ENCODE measurements at regions of chr19 and their contacts with region 1.

Region 1: GRCh38 chr19:55516878-55517620 is 19.9 kb downstream of the SBK2 start:
- DNase-seq: peak; percentile 100
- CTCF ChIP-seq: peak; percentile 98

Region 2: GRCh38 chr19:55418185-55418584 is 98.9 kb before region 1 on chr19:
- CTCF ChIA-PET with region 1: no interaction called
- POLR2A ChIA-PET with region 1: no interaction called
- DNase-seq: peak; percentile 71
- CTCF ChIP-seq: peak; percentile 71

Region 3: GRCh38 chr19:55549500-55550320 is 32.7 kb after region 1 on chr19:
- CTCF ChIA-PET with region 1: no interaction called
- POLR2A ChIA-PET with region 1: no interaction called
- DNase-seq: no peak
- CTCF ChIP-seq: no peak

Region 4: GRCh38 chr19:55624109-55625003 is 107.3 kb after region 1 on chr19 and contains the start of gene ZNF784:
- CTCF ChIA-PET with region 1: interaction called, 24 read pairs
- POLR2A ChIA-PET with region 1: no interaction called
- DNase-seq: peak; percentile 94
- CTCF ChIP-seq: no peak